Mammary epithelial cell (primary cell): ENCODE measurements at regions of chr1 and their contacts with region 1.

Region 1: GRCh38 chr1:84442256-84442655 is 36.8 kb upstream of the RPF1 start:
- DNase-seq: peak; percentile 83
- H3K4me3 ChIP-seq: no peak overlapping the region
- H3K27ac ChIP-seq: no peak overlapping the region
- H3K4me1 ChIP-seq: peaks cover 8% of the 10 kb centered on the region
- H3K27me3 ChIP-seq: no peaks in the 10 kb centered on the region
- CTCF ChIP-seq: peak; percentile 53 to 60

Region 2: GRCh38 chr1:84541679-84542078 is 99.4 kb after region 1 on chr1:
- CTCF ChIA-PET with region 1: no interaction called
- dilution Hi-C with region 1: no loop called
- in situ Hi-C with region 1: no loop called
- intact Hi-C with region 1: loop called (anchors 1 kb)
- DNase-seq: no peak
- H3K4me3 ChIP-seq: no peak overlapping the region
- H3K27ac ChIP-seq: no peak overlapping the region
- H3K4me1 ChIP-seq: no peaks in the 10 kb centered on the region
- H3K27me3 ChIP-seq: no peaks in the 10 kb centered on the region
- CTCF ChIP-seq: peak; percentile 7 to 20